Endothelial cell of umbilical vein (primary cell): ENCODE measurements at regions of chr16 and their contacts with region 1.

Region 1: GRCh38 chr16:77250400-77250799 is 51.2 kb downstream of the SYCE1L start:
- DNase-seq: no peak
- H3K4me3 ChIP-seq: no peak overlapping the region
- H3K27ac ChIP-seq: no peak overlapping the region
- H3K4me1 ChIP-seq: no peaks in the 10 kb centered on the region
- H3K27me3 ChIP-seq: no peaks in the 10 kb centered on the region
- CTCF ChIP-seq: no peak
- POLR2A ChIP-seq: no peak

Region 2: GRCh38 chr16:77488652-77489051 is 238.3 kb after region 1 on chr16:
- CTCF ChIA-PET with region 1: no interaction called
- POLR2A ChIA-PET with region 1: no interaction called
- dilution Hi-C with region 1: no loop called
- intact Hi-C with region 1: no loop called
- DNase-seq: no peak
- H3K4me3 ChIP-seq: no peak overlapping the region
- H3K27ac ChIP-seq: no peak overlapping the region
- H3K4me1 ChIP-seq: no peaks in the 10 kb centered on the region
- H3K27me3 ChIP-seq: no peaks in the 10 kb centered on the region
- CTCF ChIP-seq: no peak
- POLR2A ChIP-seq: no peak

Region 3: DNA sequence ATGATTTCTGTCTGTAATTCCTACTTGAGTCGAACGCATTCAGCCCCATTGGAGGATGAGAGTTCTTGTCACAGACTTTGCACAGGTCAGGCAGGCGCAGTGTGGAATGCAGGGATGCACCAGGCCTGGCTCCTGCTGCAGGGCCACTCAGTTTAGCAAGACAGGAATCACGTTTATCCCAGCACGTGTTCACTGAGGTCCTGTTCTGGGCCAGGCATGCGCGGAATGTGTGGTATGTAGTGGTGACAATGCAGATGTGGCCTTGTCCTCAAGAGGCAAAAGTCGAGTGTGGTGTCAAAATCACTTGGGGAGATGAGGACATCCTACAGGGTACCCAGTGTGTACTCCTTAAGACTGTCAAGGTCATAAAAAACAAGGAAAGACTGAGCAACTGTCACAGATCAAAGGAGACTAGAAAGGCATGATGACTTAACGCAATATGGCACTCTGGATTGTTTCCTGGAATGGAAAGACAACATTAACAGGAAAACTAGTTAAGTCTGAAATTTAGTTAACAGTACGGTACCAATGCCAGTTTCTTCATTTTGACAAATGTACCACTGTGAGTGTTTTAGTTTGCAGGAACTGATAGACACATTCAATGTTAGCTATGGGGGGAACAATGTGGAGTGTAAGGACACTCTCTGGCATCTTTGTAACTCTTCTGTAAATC is 305.9 kb after region 1 on chr16:
- CTCF ChIA-PET with region 1: no interaction called
- POLR2A ChIA-PET with region 1: no interaction called
- dilution Hi-C with region 1: no loop called
- intact Hi-C with region 1: no loop called
- DNase-seq: no peak
- H3K4me3 ChIP-seq: no peak overlapping the region
- H3K27ac ChIP-seq: no peak overlapping the region
- H3K4me1 ChIP-seq: no peaks in the 10 kb centered on the region
- H3K27me3 ChIP-seq: no peaks in the 10 kb centered on the region
- CTCF ChIP-seq: no peak
- POLR2A ChIP-seq: no peak

Region 4: DNA sequence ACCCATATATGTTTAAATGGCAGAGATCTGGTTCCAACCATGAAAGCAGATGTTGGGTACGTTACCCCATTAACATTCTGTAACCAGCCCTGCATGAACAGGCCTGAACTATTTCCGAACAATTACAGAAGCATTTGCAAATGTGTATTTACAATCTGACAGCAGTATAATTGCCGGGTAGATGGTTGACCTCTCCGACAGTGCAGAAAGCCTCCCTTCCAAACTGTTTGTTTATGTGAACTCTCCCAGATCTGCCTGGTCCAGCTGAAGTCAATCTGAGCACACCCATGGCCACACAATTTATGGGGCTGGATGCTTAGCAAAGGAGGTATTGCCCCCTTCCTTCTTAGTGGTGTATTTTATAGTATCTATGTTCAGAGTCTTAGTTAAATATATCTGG is 493.7 kb after region 1 on chr16:
- CTCF ChIA-PET with region 1: no interaction called
- POLR2A ChIA-PET with region 1: interaction called, 10 read pairs
- dilution Hi-C with region 1: no loop called
- intact Hi-C with region 1: no loop called
- DNase-seq: no peak
- H3K4me3 ChIP-seq: no peak overlapping the region
- H3K27ac ChIP-seq: no peak overlapping the region
- H3K4me1 ChIP-seq: no peaks in the 10 kb centered on the region
- H3K27me3 ChIP-seq: no peaks in the 10 kb centered on the region
- CTCF ChIP-seq: no peak
- POLR2A ChIP-seq: no peak